Activated T-helper 1 cell treated with anti-CD3 and anti-CD28 coated beads, Interleukin-12 subunit alpha, Interleukin-12 subunit beta, Interleukin-2, Interleukin-4 antibody, amounts not matched to agents 30 ng/mL and 10 ng/mL and 1 ng/mL, durations not matched to agents 14 hours and 24 hours and 36 hours (primary cell): ENCODE measurements at regions of chr4 and their contacts with region 1.

Region 1: GRCh38 chr4:123463869-123464268 is 67.3 kb downstream of the SPRY1 start:
- DNase-seq: no peak
- H3K4me3 Mint-ChIP-seq: no peak overlapping the region
- H3K27ac Mint-ChIP-seq: no peak overlapping the region
- H3K4me1 Mint-ChIP-seq: peaks cover 6% of the 10 kb centered on the region
- H3K27me3 Mint-ChIP-seq: peaks cover 8% of the 10 kb centered on the region

Region 2: GRCh38 chr4:123449780-123450179 is 14.1 kb before region 1 on chr4:
- intact Hi-C with region 1: loop called (anchors 2 kb)
- DNase-seq: no peak
- H3K4me3 Mint-ChIP-seq: peak overlapping the region; percentile 32
- H3K27ac Mint-ChIP-seq: peak overlapping the region; percentile 6
- H3K4me1 Mint-ChIP-seq: peaks cover 28% of the 10 kb centered on the region
- H3K27me3 Mint-ChIP-seq: no peaks in the 10 kb centered on the region

Region 3: GRCh38 chr4:123505095-123506010 is 41.5 kb after region 1 on chr4:
- intact Hi-C with region 1: no loop called
- DNase-seq: no peak
- H3K4me3 Mint-ChIP-seq: peak overlapping the region; percentile 85
- H3K27ac Mint-ChIP-seq: peak overlapping the region; percentile 79
- H3K4me1 Mint-ChIP-seq: peaks cover 21% of the 10 kb centered on the region
- H3K27me3 Mint-ChIP-seq: peaks cover 38% of the 10 kb centered on the region